Dorsolateral prefrontal cortex (tissue), 120 donors: ENCODE measurements at regions of chr19 and their contacts with region 1.

Region 1: DNA sequence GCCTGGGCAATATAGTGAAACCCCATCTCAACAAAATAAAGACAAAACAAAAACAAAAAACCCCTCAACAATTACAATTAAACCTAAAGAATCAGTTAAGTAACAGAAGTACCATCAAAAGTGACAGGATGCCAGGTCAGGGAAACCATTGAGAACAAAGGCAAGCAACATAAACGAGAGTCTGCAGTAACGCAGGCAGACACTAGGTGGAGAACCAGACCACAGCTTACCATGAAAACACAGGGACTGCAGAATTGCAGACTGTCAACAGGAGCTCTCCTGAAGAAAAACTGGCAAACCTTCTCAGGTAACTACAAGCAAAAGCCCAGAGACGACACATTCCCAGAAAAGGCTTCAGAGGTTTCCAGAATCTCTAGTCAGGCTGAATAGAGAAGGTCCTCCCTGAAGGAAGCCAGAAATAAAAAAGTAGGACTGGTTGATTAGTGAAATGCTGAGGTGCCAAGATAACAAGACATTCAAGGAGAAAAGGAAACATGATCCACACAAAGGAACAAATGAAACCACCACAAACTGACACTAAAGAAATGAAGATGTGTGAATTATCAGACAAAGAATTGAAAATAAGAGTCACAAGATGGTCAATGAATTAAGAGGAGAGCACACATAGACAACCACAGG is 2.2 kb upstream of the ZNF665 start:
- DNase-seq: peak; percentile 58 to 91 (median 77)
- H3K4me3 ChIP-seq: no peak overlapping the region
- H3K27ac ChIP-seq: peak overlapping the region in 28 of 59 donors; percentile 0 to 85 (median 44)
- H3K27me3 ChIP-seq: no peaks in the 10 kb centered on the region
- CTCF ChIP-seq: peak; percentile 63 to 96 (median 91)

Region 2: DNA sequence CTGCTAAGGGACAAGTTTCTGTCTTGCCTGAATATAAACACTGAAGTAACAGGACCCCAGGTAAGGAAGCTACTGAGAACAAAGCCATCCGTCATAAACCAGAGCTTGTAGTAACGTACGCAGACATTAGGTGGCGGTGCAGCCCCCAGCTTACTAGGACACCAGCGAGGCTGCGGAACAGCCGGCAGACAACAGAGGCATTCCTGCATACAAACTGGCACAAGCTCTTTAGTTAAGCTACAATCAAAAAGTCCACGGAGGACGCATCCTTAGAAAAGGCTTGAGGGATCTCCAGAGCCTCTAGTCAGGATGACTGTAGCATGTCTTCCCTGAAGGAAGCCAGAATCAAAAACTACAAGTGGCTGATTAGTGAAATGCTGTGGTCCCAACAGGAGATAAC is 118.4 kb before region 1 on chr19:
- intact Hi-C with region 1: loop called (anchors 5 to 10 kb)
- DNase-seq: peak; percentile 59 to 83 (median 74)
- H3K4me3 ChIP-seq: peak overlapping the region in 3 of 59 donors; percentile 7 to 20 (median 14)
- H3K27ac ChIP-seq: peak overlapping the region in 6 of 59 donors; percentile 2 to 61 (median 38)
- H3K27me3 ChIP-seq: no peaks in the 10 kb centered on the region
- CTCF ChIP-seq: peak; percentile 46 to 90 (median 78)

Region 3: DNA sequence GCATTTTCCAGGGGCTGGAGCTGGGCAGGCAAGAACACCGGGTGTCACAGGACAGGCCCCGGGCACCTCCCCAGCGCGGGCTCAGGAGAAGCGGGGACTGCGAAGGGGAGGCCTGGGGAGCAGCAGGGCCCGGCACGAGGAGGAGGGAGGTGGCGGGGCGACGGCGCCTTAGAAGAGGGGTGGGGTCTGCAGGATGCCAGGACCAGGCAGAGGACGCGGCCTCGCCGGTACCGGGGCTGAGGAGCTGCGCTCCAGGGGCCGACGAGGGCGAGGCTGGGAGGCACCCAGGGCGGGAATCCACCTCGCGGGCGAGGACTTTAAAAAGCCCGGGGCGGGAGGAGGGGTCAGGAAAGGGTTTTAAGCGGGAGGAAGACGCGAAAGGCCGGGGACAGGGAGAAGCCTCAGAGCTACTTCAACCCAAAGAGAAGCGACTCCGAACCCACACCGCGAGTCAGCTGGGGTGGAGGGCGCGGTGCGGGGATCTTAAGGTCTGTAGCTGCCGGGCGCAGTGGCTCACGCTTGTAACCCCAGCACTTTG is 37.2 kb before region 1 on chr19:
- intact Hi-C with region 1: loop called in 1 of 2 experiments (anchors 1 kb)
- DNase-seq: peak in 6 of 10 donors; percentile 21 to 57 (median 35)
- H3K4me3 ChIP-seq: peak overlapping the region; percentile 49 to 83 (median 72)
- H3K27ac ChIP-seq: peak overlapping the region in 52 of 59 donors; percentile 11 to 86 (median 61)
- H3K27me3 ChIP-seq: no peaks in the 10 kb centered on the region
- CTCF ChIP-seq: no peak

Region 4: GRCh38 chr19:53333463-53334449 is 138.4 kb after region 1 on chr19 and contains the start of gene ZNF845:
- intact Hi-C with region 1: loop called (anchors 10 kb)
- DNase-seq: peak; percentile 83 to 96 (median 91)
- H3K4me3 ChIP-seq: peak within 1 kb of the TSS; percentile 51 to 91 (median 76)
- H3K27ac ChIP-seq: peak within 1 kb of the TSS in 46 of 59 donors; percentile 12 to 80 (median 59)
- H3K27me3 ChIP-seq: peaks cover 0 to 7% (median 0%) of the 10 kb centered on the region in 45 donors
- CTCF ChIP-seq: peak in 8 of 56 donors; percentile 10 to 33 (median 17)
- total RNA-seq, gene ZNF845: 2.6 to 6.5 (median 4.3) TPM